Right cardiac atrium (tissue), 5 donors: ENCODE measurements at regions of chr3 and their contacts with region 1.

Region 1: GRCh38 chr3:184371570-184372018 is 6.4 kb downstream of the THPO start:
- DNase-seq: peak; percentile 83 to 91 (median 90)
- ATAC-seq: peak; percentile 87 to 90
- H3K4me3 ChIP-seq: no peak overlapping the region
- H3K27ac ChIP-seq: no peak overlapping the region
- H3K4me1 ChIP-seq: peaks cover 6% of the 10 kb centered on the region
- H3K27me3 ChIP-seq: no peaks in the 10 kb centered on the region

Region 2: GRCh38 chr3:184513276-184514170 is 141.9 kb after region 1 on chr3:
- intact Hi-C with region 1: loop called in 2 of 4 experiments (anchors 2 to 10 kb)
- DNase-seq: peak; percentile 85 to 93 (median 93)
- ATAC-seq: peak; percentile 97 to 99
- H3K4me3 ChIP-seq: peak overlapping the region; percentile 52
- H3K27ac ChIP-seq: no peak overlapping the region
- H3K4me1 ChIP-seq: no peaks in the 10 kb centered on the region
- H3K27me3 ChIP-seq: peaks cover under 1% of the 10 kb centered on the region

Region 3: DNA sequence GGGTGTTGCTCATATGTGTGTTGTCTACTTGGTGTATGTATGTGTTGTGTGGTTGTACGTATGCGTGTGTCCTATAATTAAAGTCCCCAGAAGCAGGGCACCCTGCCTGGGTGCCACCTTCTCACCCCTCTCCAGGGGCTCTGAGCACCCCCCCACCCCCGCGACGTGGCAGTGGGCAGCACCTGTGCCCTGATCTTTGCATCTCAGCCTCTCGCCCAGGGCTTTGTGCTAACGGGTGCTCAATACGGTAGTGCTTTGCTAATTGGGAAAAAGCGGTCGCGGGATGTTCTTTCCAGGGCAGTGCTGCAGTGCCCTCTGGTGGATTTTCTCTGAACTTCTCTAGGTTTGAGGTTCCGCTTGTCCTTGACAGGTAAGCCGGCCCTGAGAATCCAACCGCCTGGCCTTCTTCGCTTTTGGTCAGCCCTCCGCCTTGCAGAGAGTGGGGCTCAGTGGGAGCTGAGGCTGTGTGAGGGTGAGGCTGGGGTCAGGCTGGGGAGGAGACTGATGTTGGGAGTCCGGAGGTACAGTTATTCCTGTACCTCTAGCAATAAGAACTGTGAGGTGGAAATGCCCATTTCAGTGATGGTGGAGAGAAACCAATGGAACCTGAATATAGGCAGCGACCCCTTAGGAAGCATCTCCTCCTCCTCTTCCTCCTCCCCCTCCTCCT is 172.4 kb after region 1 on chr3:
- intact Hi-C with region 1: loop called (anchors 5 to 10 kb)
- DNase-seq: peak; percentile 60 to 74 (median 72)
- ATAC-seq: peak; percentile 53 to 73
- H3K4me3 ChIP-seq: no peak overlapping the region
- H3K27ac ChIP-seq: no peak overlapping the region
- H3K4me1 ChIP-seq: no peaks in the 10 kb centered on the region
- H3K27me3 ChIP-seq: no peaks in the 10 kb centered on the region